MCF 10A (cell line): ENCODE measurements at regions of chr10 and their contacts with region 1.

Region 1: GRCh38 chr10:93482145-93482834 is at the start of gene MYOF:
- DNase-seq: peak; percentile 89
- H3K4me3 Mint-ChIP-seq: peak within 1 kb of the TSS; percentile 95
- H3K27ac Mint-ChIP-seq: peak within 1 kb of the TSS; percentile 89
- H3K4me1 Mint-ChIP-seq: peaks cover 21% of the 10 kb centered on the region
- H3K27me3 Mint-ChIP-seq: no peaks in the 10 kb centered on the region
- CTCF ChIP-seq: peak; percentile 45
- total RNA-seq, gene MYOF: 167 and 181 TPM in 2 replicates

Region 2: DNA sequence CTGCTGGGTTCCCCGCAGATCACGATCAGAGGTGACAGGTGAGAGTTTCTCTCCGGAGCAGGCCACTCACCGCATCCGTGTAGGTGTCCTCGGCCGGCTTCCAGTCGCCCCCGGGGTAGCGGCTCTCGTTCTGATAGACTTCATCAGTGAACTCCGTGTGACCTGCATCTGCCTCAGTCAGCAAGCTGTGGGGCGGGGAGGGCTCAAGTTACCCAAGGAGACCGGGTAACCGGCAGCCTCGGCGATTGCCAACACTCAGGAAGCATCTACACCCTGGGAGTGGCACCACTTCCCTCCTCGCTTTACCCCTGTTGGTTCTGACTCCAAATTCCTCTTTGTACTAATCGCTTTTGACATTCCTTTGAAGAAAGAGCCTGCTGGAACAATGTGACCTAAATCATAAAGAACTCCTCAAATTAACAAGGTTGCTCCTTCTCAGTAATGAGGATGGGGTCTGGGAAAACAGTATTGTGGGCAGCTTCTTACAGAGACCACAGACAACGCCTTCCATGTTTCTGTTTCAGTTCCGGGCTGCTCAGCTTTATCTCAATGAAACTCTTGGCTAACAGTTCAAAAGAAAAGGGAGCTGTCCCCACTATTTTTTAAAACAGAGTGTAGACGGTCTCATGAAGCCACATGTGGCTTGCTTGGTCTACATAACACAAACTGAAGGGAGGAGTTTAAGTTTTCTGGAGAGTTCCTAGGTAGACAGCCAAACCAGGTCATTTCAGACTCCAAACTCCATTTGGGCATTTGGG is 118.2 kb before region 1 on chr10:
- CTCF ChIA-PET with region 1: interaction called, 53 read pairs
- POLR2A ChIA-PET with region 1: interaction called, 5 read pairs
- intact Hi-C with region 1: no loop called
- DNase-seq: no peak
- H3K4me3 Mint-ChIP-seq: no peak overlapping the region
- H3K27ac Mint-ChIP-seq: no peak overlapping the region
- H3K4me1 Mint-ChIP-seq: no peaks in the 10 kb centered on the region
- H3K27me3 Mint-ChIP-seq: no peaks in the 10 kb centered on the region
- CTCF ChIP-seq: no peak

Region 3: GRCh38 chr10:93437088-93437945 is 45.0 kb before region 1 on chr10:
- CTCF ChIA-PET with region 1: interaction called, 139 read pairs
- POLR2A ChIA-PET with region 1: interaction called, 2,342 read pairs
- intact Hi-C with region 1: loop called (anchors 1 kb)
- DNase-seq: peak; percentile 96
- H3K4me3 Mint-ChIP-seq: peak overlapping the region; percentile 70
- H3K27ac Mint-ChIP-seq: peak overlapping the region; percentile 98
- H3K4me1 Mint-ChIP-seq: peaks cover 65% of the 10 kb centered on the region
- H3K27me3 Mint-ChIP-seq: no peaks in the 10 kb centered on the region
- CTCF ChIP-seq: no peak

Region 4: GRCh38 chr10:93458821-93459257 is 23.5 kb before region 1 on chr10:
- CTCF ChIA-PET with region 1: interaction called, 178 read pairs
- POLR2A ChIA-PET with region 1: interaction called, 2,342 read pairs
- intact Hi-C with region 1: no loop called
- DNase-seq: peak; percentile 94
- H3K4me3 Mint-ChIP-seq: peak overlapping the region; percentile 67
- H3K27ac Mint-ChIP-seq: peak overlapping the region; percentile 98
- H3K4me1 Mint-ChIP-seq: peaks cover 41% of the 10 kb centered on the region
- H3K27me3 Mint-ChIP-seq: no peaks in the 10 kb centered on the region
- CTCF ChIP-seq: no peak

Region 5: GRCh38 chr10:93496322-93497041 is 14.2 kb after region 1 on chr10 and contains the start of gene CEP55:
- CTCF ChIA-PET with region 1: interaction called, 22 read pairs
- POLR2A ChIA-PET with region 1: interaction called, 56 read pairs
- intact Hi-C with region 1: no loop called
- DNase-seq: peak; percentile 94
- H3K4me3 Mint-ChIP-seq: peak within 1 kb of the TSS; percentile 84
- H3K27ac Mint-ChIP-seq: peak within 1 kb of the TSS; percentile 73
- H3K4me1 Mint-ChIP-seq: peaks cover 24% of the 10 kb centered on the region
- H3K27me3 Mint-ChIP-seq: no peaks in the 10 kb centered on the region
- CTCF ChIP-seq: no peak
- total RNA-seq, gene CEP55: 25.2 and 39.4 TPM in 2 replicates

Region 6: GRCh38 chr10:93515071-93516005 is 33.0 kb after region 1 on chr10:
- CTCF ChIA-PET with region 1: interaction called, 27 read pairs
- POLR2A ChIA-PET with region 1: interaction called, 3 read pairs
- intact Hi-C with region 1: no loop called
- DNase-seq: no peak
- H3K4me3 Mint-ChIP-seq: no peak overlapping the region
- H3K27ac Mint-ChIP-seq: peak overlapping the region; percentile 1
- H3K4me1 Mint-ChIP-seq: peaks cover 7% of the 10 kb centered on the region
- H3K27me3 Mint-ChIP-seq: no peaks in the 10 kb centered on the region
- CTCF ChIP-seq: no peak